ENCODE measurements at regions of chr3 and their contacts with region 1.

Region 1: DNA sequence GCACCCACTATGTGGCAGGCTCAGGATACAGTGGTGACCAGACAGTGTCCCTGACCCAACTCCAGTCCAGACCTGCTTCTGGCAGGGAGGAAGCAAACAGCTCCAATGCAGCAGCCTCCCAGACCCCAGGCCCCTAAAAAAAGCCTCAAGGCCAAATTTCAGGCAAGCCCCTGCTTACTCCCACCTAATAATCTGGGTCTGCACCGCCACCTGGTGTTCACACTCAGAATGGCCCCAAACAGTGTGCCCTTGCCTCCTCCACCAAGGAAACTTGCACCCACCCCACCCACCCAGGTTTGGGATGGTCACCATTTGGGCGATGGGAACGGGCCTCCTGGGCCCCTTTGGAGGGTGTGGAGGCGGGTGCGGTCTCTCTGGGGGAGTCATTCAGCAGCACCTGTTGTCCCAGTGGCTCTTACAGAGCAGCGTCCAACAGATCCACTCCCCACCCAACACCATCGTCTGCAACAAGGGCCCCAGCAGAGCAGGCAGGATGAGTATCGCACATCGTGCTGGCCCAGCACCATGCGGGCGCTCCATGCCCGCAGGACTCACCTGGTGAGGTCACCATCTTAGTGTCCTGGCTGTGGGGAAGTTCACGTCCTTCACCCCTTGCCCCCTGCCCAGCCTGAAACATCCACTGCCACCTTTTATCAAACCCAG is 17.3 kb downstream of the C3orf18 start:
- DNase-seq: peak; percentile 91
- ATAC-seq: peak; percentile 82
- H3K4me3 Mint-ChIP-seq: no peak overlapping the region
- H3K27ac Mint-ChIP-seq: no peak overlapping the region
- H3K4me1 Mint-ChIP-seq: peaks cover 11% of the 10 kb centered on the region
- H3K27me3 Mint-ChIP-seq: no peaks in the 10 kb centered on the region
- CTCF ChIP-seq: peak; percentile 86

Region 2: GRCh38 chr3:50337191-50337841 is 212.9 kb before region 1 on chr3:
- CTCF ChIA-PET with region 1: interaction called, 13 read pairs
- POLR2A ChIA-PET with region 1: no interaction called
- DNase-seq: peak; percentile 99
- ATAC-seq: peak; percentile 91
- H3K4me3 Mint-ChIP-seq: peak overlapping the region; percentile 95
- H3K27ac Mint-ChIP-seq: peak overlapping the region; percentile 98
- H3K4me1 Mint-ChIP-seq: peaks cover 33% of the 10 kb centered on the region
- H3K27me3 Mint-ChIP-seq: peaks cover 43% of the 10 kb centered on the region
- CTCF ChIP-seq: no peak

Region 3: DNA sequence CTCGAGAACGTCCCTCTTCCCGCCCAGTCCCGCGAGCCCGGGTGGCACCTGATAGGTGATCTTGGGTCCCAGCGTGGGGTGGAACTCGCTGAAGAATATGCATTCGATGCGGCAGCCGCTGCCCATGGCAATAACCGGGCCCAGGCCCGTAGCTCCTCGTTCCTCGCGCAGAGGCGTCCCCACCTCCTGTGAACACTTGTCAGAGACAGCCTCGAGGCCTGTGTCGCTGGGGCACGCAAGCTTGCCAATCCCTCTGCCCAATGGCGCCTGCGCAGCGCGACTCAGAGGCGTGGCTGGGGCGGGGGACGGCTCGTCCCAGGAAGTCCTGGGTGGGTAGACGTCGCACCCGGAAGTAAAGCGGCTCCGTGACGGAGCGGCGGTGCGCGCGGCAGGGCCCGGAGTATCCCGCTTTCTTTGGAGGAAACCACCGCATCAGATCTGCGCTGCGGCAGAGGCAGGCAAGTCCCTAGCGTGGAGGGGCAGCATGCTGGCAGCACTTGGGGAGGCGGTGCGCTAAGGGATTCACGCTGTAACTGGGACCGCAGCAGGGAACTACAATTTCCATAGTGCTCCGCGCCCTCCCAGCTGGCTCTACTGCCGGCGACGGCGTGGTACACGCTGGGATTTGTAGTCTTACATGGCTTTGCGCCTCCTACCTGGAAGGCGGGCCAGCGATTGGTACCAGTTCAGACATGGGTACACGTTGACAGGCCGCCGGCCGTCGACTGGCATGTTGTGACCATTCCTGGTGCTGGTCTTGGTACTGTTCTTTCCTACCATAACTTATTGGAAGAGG is 199.5 kb before region 1 on chr3 and contains the starts of genes CYB561D2 and NPRL2:
- CTCF ChIA-PET with region 1: interaction called, 19 read pairs
- POLR2A ChIA-PET with region 1: no interaction called
- DNase-seq: peak; percentile 90
- ATAC-seq: peak; percentile 87
- H3K4me3 Mint-ChIP-seq: peak within 1 kb of the TSS; percentile 95
- H3K27ac Mint-ChIP-seq: peak within 1 kb of the TSS; percentile 93
- H3K4me1 Mint-ChIP-seq: peaks cover 18% of the 10 kb centered on the region
- H3K27me3 Mint-ChIP-seq: peaks cover 10% of the 10 kb centered on the region
- CTCF ChIP-seq: no peak
- total RNA-seq, gene CYB561D2: 9.8 to 12.0 TPM (median 11.3 TPM) in 3 replicates
- total RNA-seq, gene NPRL2: 20.6 to 26.6 TPM (median 23.9 TPM) in 3 replicates

Region 4: GRCh38 chr3:50436114-50436674 is 114.0 kb before region 1 on chr3:
- CTCF ChIA-PET with region 1: interaction called, 25 read pairs
- POLR2A ChIA-PET with region 1: no interaction called
- DNase-seq: peak; percentile 89
- ATAC-seq: peak; percentile 92
- H3K4me3 Mint-ChIP-seq: no peak overlapping the region
- H3K27ac Mint-ChIP-seq: no peak overlapping the region
- H3K4me1 Mint-ChIP-seq: no peaks in the 10 kb centered on the region; the same call in 1 of the 2 replicates
- H3K27me3 Mint-ChIP-seq: no peaks in the 10 kb centered on the region
- CTCF ChIP-seq: peak; percentile 91

Region 5: DNA sequence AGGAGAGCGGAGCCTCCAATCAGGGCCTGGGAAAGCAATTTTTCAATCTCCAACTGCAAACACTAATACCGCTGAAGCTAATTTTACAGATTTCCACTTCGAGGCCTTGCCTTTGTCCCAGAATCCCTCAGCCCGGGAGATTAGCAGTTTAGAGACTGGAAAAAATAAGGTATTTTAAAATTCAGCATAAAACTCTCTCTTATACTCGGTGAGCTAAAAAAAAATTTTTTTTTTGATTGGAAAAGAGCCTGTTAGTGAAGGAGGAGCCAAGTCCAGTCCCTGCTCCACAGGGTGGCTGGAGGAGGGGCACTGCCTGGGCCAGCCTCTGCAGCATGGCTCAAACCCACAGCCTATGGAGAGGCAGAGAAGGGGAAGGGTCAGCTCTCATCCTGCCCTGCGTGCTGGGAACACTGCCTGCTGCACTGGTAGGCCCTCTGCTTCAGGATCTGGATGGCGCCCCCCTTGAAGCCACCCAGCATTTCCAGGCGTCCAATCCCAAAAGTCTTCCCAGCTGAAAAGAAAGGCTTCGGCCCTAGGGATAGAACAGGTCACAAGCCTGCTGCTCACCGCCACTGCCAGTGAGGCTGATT is 95.6 kb before region 1 on chr3:
- CTCF ChIA-PET with region 1: no interaction called
- POLR2A ChIA-PET with region 1: no interaction called
- DNase-seq: peak; percentile 50
- ATAC-seq: peak; percentile 76
- H3K4me3 Mint-ChIP-seq: no peak overlapping the region
- H3K27ac Mint-ChIP-seq: peak overlapping the region; percentile 41
- H3K4me1 Mint-ChIP-seq: peaks cover 33% of the 10 kb centered on the region
- H3K27me3 Mint-ChIP-seq: peaks cover 2% of the 10 kb centered on the region; the same call in 1 of the 2 replicates
- CTCF ChIP-seq: no peak

Region 6: GRCh38 chr3:50509715-50510114 is 40.5 kb before region 1 on chr3:
- CTCF ChIA-PET with region 1: interaction called, 42 read pairs
- POLR2A ChIA-PET with region 1: no interaction called
- DNase-seq: no peak
- ATAC-seq: peak; percentile 69
- H3K4me3 Mint-ChIP-seq: no peak overlapping the region
- H3K27ac Mint-ChIP-seq: no peak overlapping the region
- H3K4me1 Mint-ChIP-seq: peaks cover 5% of the 10 kb centered on the region
- H3K27me3 Mint-ChIP-seq: peaks cover 12% of the 10 kb centered on the region
- CTCF ChIP-seq: no peak

Region 7: DNA sequence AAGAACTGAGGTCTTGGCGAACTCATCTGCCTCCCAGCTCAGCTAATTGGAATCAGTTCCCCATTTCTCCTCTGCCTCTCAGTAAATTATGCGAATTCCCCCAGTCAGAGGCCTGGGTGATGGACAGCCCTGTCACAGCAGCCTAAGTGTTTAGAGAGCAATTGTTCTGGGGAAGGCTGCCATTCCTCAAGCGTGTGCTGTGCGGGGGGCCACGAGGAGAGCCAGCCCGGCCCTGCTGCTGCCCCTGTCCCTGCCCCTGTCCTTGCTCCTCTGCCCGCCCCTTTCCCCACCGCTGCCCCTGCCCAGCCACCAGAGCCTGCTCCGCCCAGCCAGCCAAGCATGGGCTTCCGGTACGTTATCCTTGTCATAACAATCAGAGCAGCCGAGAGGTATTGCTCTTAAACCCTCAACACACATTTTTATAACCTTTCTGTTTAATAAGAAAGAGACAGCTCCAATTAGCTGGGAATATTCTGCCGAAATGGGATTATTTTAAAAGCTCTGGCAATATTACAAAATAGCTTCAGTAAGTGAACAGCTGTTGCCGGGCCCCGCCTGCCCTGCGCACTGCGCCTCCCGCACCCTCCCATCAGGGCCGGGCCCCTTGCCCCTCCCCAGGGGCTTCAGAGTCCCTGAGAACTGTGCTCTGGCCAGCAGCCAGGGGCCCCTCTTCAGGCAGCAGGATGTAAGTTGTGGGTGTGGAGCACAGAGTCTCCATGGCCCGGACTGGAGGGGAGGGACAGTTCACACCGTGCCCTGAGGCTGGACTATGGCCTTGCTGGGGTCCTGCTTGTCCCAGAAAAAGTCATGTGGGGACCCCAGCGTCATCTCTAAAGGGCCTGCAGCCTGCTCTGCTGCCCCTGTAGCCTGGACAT is 34.4 kb before region 1 on chr3:
- CTCF ChIA-PET with region 1: interaction called, 42 read pairs
- POLR2A ChIA-PET with region 1: no interaction called
- DNase-seq: peak; percentile 70
- ATAC-seq: peak; percentile 69
- H3K4me3 Mint-ChIP-seq: peak overlapping the region; percentile 33
- H3K27ac Mint-ChIP-seq: 0 out of 2 replicates have a peak overlapping the region, but pooled peaks have one; percentile 15
- H3K4me1 Mint-ChIP-seq: peaks cover 57% of the 10 kb centered on the region
- H3K27me3 Mint-ChIP-seq: peaks cover 5% of the 10 kb centered on the region
- CTCF ChIP-seq: no peak

Region 8: GRCh38 chr3:50568947-50569749 is 18.9 kb after region 1 on chr3 and contains the start of gene HEMK1:
- CTCF ChIA-PET with region 1: interaction called, 12 read pairs
- POLR2A ChIA-PET with region 1: interaction called, 3 read pairs
- DNase-seq: peak; percentile 99
- ATAC-seq: peak; percentile 72
- H3K4me3 Mint-ChIP-seq: peak within 1 kb of the TSS; percentile 96
- H3K27ac Mint-ChIP-seq: peak within 1 kb of the TSS; percentile 91
- H3K4me1 Mint-ChIP-seq: peaks cover 17% of the 10 kb centered on the region
- H3K27me3 Mint-ChIP-seq: peaks cover 17% of the 10 kb centered on the region
- CTCF ChIP-seq: no peak
- total RNA-seq, gene HEMK1: 15.2 to 20.9 TPM (median 15.8 TPM) in 3 replicates